Heart right ventricle (tissue), 16 donors: ENCODE measurements at regions of chr6 and their contacts with region 1.

Region 1: DNA sequence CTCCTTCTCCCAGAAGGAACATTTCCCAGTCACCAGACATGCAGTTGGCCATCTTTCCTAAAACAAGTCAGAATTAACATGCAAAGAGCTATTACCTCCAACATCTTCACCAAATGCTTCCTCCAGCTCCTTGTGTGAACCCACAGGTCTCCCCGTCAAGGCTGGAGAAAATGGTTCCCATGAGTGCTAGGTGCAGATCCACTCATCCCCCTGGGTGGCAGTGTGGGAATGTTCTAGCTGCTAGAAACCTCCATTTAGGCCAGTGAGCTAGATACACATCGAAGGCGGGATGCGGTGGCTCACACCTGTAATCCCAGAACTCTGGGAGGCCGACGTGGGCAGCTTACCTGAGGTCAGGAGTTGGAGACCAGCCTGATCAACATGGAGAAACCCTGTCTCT is 603.9 kb upstream of the SLC35B3 start:
- DNase-seq: no peak
- ATAC-seq: no peak
- H3K4me3 ChIP-seq: no peak overlapping the region
- H3K27ac ChIP-seq: no peak overlapping the region
- H3K4me1 ChIP-seq: no peaks in the 10 kb centered on the region
- H3K27me3 ChIP-seq: no peaks in the 10 kb centered on the region
- CTCF ChIP-seq: no peak

Region 2: DNA sequence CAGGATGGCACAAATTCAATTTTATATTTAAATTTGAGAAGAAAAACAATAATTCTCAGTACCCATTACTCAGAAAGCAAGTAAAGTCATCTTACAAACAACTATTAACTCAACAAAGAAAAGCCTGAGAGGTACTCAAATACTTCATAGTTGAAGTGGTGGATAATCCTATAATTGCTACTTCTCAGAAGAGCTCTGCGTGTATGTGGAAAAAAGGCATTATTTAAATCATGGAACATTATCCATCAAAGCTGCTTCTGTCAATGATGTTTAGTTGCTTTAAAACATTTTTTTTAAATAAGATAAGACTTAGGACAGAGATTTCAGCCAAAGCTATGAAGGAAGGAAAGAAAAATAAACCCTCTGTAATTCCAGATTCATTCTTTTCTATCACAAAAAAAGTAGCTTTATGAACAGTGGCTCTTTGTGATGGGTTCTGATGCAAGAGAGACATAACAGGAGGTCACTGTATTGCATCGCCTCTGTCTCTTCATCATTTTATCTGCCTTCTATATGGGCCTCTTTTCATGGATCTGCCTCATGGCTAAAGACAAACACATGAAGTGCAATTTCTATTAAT is 236.0 kb before region 1 on chr6:
- intact Hi-C with region 1: no loop called
- DNase-seq: no peak
- ATAC-seq: no peak
- H3K4me3 ChIP-seq: no peak overlapping the region
- H3K27ac ChIP-seq: no peak overlapping the region
- H3K4me1 ChIP-seq: no peaks in the 10 kb centered on the region
- H3K27me3 ChIP-seq: no peaks in the 10 kb centered on the region
- CTCF ChIP-seq: no peak

Region 3: DNA sequence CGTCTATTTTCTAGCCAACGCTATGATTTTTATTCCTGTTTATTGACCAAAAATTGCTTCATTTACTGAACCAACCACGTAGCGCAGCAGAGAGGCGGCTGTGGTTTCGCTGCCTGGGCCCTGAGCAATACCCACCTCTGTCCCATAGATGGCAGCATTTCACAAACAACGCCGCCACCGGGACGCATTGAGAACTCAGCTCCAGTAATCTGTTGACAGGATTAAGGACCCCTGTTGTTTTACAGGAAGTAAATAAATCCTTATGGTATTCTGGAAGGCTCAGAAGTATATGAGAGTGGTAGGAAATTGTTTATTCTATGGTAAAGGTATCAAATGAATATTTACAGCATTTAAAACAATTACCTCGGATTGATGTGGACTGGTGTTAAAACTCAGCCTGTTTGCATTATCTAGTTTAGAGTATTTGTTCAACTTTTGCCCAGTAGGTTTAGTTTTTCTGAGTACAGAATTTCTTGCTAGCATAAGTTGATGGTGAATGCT is 56.0 kb before region 1 on chr6:
- intact Hi-C with region 1: loop called in 1 of 10 experiments (anchors 2 kb)
- DNase-seq: peak; percentile 29 to 31
- ATAC-seq: peak in 6 of 8 donors; percentile 67 to 76 (median 70)
- H3K4me3 ChIP-seq: no peak overlapping the region
- H3K27ac ChIP-seq: no peak overlapping the region
- H3K4me1 ChIP-seq: peaks cover 0 to 7% (median 0%) of the 10 kb centered on the region in 9 donors
- H3K27me3 ChIP-seq: peaks cover 0 to 30% (median 4%) of the 10 kb centered on the region in 7 donors
- CTCF ChIP-seq: peak; percentile 55 to 96 (median 91)

Region 4: GRCh38 chr6:9523462-9523861 is 484.2 kb after region 1 on chr6:
- intact Hi-C with region 1: no loop called
- DNase-seq: no peak
- ATAC-seq: no peak
- H3K4me3 ChIP-seq: no peak overlapping the region
- H3K27ac ChIP-seq: no peak overlapping the region
- H3K4me1 ChIP-seq: no peaks in the 10 kb centered on the region
- H3K27me3 ChIP-seq: no peaks in the 10 kb centered on the region
- CTCF ChIP-seq: no peak

Region 5: GRCh38 chr6:9537381-9537780 is 498.1 kb after region 1 on chr6:
- intact Hi-C with region 1: no loop called
- DNase-seq: no peak
- ATAC-seq: no peak
- H3K4me3 ChIP-seq: no peak overlapping the region
- H3K27ac ChIP-seq: no peak overlapping the region
- H3K4me1 ChIP-seq: no peaks in the 10 kb centered on the region
- H3K27me3 ChIP-seq: peaks cover 0 to 3% (median 0%) of the 10 kb centered on the region in 7 donors
- CTCF ChIP-seq: no peak